ENCODE measurements at regions of chr14 and their contacts with region 1.

Region 1: DNA sequence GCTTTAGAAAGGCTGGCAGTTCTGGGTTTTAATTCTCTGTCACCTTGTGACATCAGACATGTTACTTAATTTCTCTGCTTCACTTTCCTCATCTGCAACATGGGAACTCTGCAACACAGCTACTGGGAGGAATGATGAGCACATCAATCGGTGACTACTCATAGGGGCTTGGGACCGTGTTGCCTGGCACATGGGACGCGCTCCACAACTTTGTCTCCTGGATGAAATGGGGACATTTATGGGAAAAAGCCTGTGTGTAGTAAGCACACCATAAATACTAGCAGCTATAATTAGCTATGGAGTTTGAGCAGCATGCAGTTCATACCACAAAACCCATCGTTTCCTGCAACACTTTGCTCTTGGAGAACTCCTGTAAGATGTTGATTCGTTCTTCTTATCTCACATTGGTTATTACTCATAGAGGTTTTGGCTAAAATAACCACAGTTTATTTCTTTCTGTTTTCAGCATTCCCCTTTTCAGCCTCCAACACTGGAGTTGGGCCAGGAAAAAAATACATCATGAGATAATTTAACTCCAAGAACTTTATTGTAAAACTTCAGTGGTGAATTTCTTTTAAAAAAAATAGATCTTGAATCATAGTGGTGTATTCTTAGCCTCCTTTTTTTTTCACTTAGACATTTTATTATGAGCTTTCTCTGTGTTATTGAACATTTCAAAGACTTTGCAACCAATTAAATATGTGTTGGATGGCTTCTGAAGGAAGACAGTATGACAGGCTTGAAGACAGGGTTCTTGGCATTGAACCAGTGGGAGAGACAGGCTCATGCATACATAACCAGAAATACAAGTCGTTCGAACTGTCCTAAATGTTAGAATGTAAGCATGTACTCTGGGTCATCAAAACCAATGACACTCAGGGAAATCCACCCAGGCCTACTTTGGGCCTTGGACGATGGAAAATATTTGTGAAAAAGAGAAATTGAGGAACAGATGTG is 72.7 kb downstream of the RIN3 start:
- DNase-seq: peak in 2 of 4 donors; percentile 77 to 85
- ATAC-seq: peak; percentile 72
- H3K4me3 ChIP-seq: no peak overlapping the region
- H3K27ac ChIP-seq: peak overlapping the region; percentile 62 to 74
- H3K4me1 ChIP-seq: peaks cover 0 to 55% of the 10 kb centered on the region in 2 donors
- H3K27me3 ChIP-seq: no peaks in the 10 kb centered on the region
- CTCF ChIP-seq: no peak

Region 2: DNA sequence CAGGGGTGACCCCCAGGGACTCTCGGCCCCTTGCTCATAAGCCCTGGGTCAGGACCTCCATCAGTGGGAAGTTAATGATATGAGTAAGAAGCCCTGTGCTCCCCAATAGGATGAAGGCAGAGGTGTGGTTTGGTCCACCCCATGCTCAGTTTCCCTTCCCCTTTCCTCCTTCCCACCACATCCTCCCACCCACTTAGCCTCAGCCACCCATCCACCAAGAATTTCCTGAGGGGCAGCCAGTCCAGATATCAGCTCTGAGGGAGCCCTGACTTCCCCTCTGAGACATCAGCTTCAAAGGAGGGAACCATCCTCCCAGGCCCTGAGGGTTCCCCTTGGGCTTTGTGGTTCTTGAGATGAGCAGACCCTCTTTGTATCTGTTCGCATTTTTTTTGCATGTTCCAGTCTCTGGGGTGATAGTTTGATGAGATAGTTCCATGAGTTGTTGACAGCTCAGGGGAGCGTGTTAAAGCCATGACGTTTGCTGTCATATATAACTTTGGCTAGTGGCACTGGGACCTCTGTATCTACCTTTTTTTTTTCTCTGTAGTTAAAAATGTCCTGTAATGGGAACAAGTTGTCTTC is 90.9 kb after region 1 on chr14:
- intact Hi-C with region 1: loop called in 1 of 2 experiments (anchors 10 kb)
- DNase-seq: no peak
- ATAC-seq: peak; percentile 38
- H3K4me3 ChIP-seq: no peak overlapping the region
- H3K27ac ChIP-seq: no peak overlapping the region
- H3K4me1 ChIP-seq: peaks cover 0 to 42% of the 10 kb centered on the region in 2 donors
- H3K27me3 ChIP-seq: no peaks in the 10 kb centered on the region
- CTCF ChIP-seq: no peak

Measured in left lung (tissue), 14 donors.